GM13976 (cell line): ENCODE measurements at regions of chr9 and their contacts with region 1.

Region 1: DNA sequence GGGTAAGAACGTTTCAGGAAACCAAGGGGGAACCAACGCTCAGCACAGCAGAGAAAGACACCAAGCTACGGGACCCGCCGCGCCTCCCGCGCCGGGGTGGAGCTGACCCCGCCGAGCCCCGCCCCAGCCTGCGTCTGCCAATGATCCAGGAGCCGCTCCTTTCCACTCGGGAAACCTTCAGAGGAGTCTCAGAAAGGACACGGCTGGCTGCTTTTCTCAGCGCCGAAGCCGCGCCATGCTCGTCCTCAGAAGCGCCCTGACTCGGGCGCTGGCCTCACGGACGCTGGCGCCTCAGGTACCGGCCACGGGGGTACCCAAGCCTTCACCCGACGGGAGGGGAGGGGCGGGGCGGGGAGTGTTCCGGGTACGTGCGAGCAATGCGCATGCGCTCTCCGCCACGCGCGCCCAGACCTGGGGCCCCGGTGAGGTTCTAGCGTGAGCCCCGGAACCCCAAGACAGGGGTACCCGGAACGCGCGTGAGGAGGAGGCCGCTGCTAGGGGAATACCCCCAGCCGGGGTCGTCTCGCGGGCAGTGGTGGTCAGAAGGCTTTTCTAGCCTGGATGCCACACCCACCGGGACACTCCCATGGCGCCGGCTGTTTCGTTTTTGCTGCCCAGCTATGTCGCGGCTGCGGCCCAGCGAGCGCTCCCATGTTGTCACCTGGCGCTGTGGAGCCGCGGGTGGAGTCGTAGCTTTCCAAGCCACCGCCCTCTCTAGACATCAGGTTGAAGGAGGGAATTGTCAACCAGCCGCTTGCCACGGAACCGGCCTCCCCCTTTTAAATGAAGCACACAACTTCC is at the start of gene NIPSNAP3A:
- DNase-seq: peak; percentile 89
- CTCF ChIP-seq: no peak

Region 2: GRCh38 chr9:104177003-104177611 is 570.7 kb before region 1 on chr9:
- in situ Hi-C with region 1: loop called (anchors 25 kb)
- DNase-seq: no peak
- CTCF ChIP-seq: peak; percentile 17

Region 3: GRCh38 chr9:104608336-104608735 is 139.4 kb before region 1 on chr9:
- in situ Hi-C with region 1: no loop called
- DNase-seq: no peak
- CTCF ChIP-seq: no peak